Breast epithelium (tissue), 4 donors: ENCODE measurements at regions of chrX and their contacts with region 1.

Region 1: GRCh38 chrX:121283921-121284320 is 236.5 kb downstream of the GLUD2 start:
- DNase-seq: no peak
- H3K4me3 ChIP-seq: no peak overlapping the region
- H3K27ac ChIP-seq: no peak overlapping the region
- H3K4me1 ChIP-seq: no peaks in the 10 kb centered on the region
- H3K27me3 ChIP-seq: no peaks in the 10 kb centered on the region
- CTCF ChIP-seq: no peak
- POLR2A ChIP-seq: no peak

Region 2: GRCh38 chrX:120781403-120781802 is 502.5 kb before region 1 on chrX:
- intact Hi-C with region 1: no loop called
- DNase-seq: no peak
- H3K4me3 ChIP-seq: no peak overlapping the region
- H3K27ac ChIP-seq: no peak overlapping the region
- H3K4me1 ChIP-seq: no peaks in the 10 kb centered on the region
- H3K27me3 ChIP-seq: peaks cover 0 to 21% of the 10 kb centered on the region in 2 donors
- CTCF ChIP-seq: no peak
- POLR2A ChIP-seq: no peak

Region 3: GRCh38 chrX:121308276-121308805 is 24.4 kb after region 1 on chrX:
- intact Hi-C with region 1: no loop called
- DNase-seq: no peak
- H3K4me3 ChIP-seq: no peak overlapping the region
- H3K27ac ChIP-seq: no peak overlapping the region
- H3K4me1 ChIP-seq: no peaks in the 10 kb centered on the region
- H3K27me3 ChIP-seq: no peaks in the 10 kb centered on the region
- CTCF ChIP-seq: no peak
- POLR2A ChIP-seq: no peak

Region 4: GRCh38 chrX:121336831-121337421 is 53.0 kb after region 1 on chrX:
- intact Hi-C with region 1: no loop called
- DNase-seq: no peak
- H3K4me3 ChIP-seq: no peak overlapping the region
- H3K27ac ChIP-seq: no peak overlapping the region
- H3K4me1 ChIP-seq: no peaks in the 10 kb centered on the region
- H3K27me3 ChIP-seq: peaks cover 0 to 4% of the 10 kb centered on the region in 2 donors
- CTCF ChIP-seq: no peak
- POLR2A ChIP-seq: no peak

Region 5: DNA sequence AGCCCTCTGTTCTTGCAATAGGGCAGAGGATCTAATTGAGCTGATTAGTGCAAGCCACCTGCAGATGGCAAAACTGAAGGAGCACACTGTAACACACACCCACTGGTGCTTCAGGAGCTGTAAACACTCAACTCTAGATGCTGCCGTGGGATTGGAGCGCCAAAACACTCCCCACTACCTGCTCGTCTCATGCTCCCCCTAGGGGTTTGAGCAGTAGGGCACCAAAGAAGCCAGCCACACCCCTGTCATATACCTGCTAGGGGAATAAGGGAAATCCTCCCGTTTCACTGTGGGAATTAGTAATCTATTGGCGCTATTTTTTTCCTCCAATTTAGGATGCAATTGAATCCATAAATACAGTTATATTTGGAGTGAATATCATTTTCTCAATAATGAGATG is 123.7 kb after region 1 on chrX:
- intact Hi-C with region 1: no loop called
- DNase-seq: no peak
- H3K4me3 ChIP-seq: no peak overlapping the region
- H3K27ac ChIP-seq: no peak overlapping the region
- H3K4me1 ChIP-seq: no peaks in the 10 kb centered on the region
- H3K27me3 ChIP-seq: no peaks in the 10 kb centered on the region
- CTCF ChIP-seq: no peak
- POLR2A ChIP-seq: no peak

Region 6: DNA sequence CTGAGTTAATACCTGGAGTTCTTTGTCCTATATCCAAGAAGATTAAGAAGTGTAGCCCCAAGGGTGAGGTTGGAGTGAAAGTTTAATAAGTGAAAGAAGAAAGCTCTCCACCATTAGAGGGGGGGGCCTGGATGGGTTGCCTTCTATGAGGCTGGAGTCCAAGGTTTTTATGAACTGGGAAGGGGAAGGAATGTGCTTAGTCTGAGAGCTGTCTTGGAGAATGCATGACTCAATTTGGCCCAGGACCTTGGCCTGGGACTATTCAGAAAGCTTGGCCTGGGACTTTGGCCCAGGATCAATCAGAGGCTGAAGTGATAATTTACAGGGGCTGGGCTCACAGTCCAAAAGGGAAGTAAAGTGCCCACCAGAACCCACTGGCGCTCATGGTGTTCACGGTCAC is 851.1 kb after region 1 on chrX:
- intact Hi-C with region 1: loop called (anchors 5 kb)
- DNase-seq: no peak
- H3K4me3 ChIP-seq: no peak overlapping the region
- H3K27ac ChIP-seq: no peak overlapping the region
- H3K4me1 ChIP-seq: no peaks in the 10 kb centered on the region
- H3K27me3 ChIP-seq: no peaks in the 10 kb centered on the region
- CTCF ChIP-seq: no peak
- POLR2A ChIP-seq: no peak

Region 7: DNA sequence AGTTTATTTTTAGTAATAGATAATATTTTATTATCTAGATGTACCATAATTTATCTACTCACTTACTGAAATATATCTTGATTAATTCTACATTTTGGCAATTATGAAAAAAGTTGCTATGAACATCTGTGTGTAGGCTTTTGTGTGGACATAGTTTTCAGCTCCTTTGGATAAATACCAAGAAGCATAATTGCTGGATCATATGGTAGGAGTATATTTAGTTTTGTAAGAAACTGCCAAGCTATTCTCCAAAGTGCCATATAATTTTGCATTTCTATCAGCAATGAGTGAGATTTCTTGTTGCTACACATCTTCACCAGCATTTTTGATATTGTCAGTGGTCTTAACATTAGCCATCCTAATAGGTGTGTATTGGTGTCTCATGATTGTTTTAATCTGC is 1017.6 kb after region 1 on chrX:
- intact Hi-C with region 1: loop called (anchors 10 kb)
- DNase-seq: no peak
- H3K4me3 ChIP-seq: no peak overlapping the region
- H3K27ac ChIP-seq: no peak overlapping the region
- H3K4me1 ChIP-seq: no peaks in the 10 kb centered on the region
- H3K27me3 ChIP-seq: no peaks in the 10 kb centered on the region
- CTCF ChIP-seq: no peak
- POLR2A ChIP-seq: no peak